Activated B cell treated with CpG ODN at 0.5 μM for 24 hours (primary cell): ENCODE measurements at regions of chr1 and their contacts with region 1.

Region 1: GRCh38 chr1:224922404-224923164 is 6.9 kb upstream of the DNAH14 start:
- DNase-seq: no peak
- ATAC-seq: no peak
- H3K4me3 Mint-ChIP-seq: no peak overlapping the region
- H3K27ac Mint-ChIP-seq: no peak overlapping the region
- H3K4me1 Mint-ChIP-seq: no peaks in the 10 kb centered on the region
- H3K27me3 Mint-ChIP-seq: peaks cover 5% of the 10 kb centered on the region
- CTCF ChIP-seq: no peak

Region 2: DNA sequence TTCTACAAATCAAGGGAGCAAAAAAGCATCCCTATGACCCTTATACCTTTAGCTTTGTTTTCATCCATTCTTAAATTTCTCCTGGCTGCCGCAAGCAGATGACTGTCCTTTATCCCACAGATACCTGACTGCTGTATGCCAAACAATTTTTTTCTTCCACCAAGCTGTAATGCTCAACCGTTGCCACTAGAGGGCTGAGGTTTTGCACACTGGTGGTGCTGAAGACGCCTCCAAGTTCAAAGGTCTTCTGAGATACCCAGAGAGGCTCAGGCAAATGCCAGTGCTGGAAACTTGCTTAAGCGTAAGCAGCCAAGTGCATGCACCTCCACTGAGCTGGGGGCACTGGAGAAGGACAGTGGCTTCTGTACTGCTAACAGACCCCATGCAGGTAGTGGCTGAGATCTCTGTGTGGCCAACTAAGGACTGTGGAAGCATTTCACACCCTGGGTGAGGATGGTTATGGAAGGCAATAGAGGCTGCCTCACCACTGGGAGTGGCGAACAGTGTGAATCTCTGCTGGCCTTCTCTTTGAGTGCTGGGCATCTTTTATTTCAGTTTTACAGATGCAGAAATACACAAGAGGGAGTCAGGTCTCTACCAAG is 277.9 kb before region 1 on chr1:
- CTCF ChIA-PET with region 1: no interaction called
- POLR2A ChIA-PET with region 1: no interaction called
- intact Hi-C with region 1: loop called (anchors 1 kb)
- DNase-seq: peak; percentile 18
- ATAC-seq: no peak
- H3K4me3 Mint-ChIP-seq: no peak overlapping the region
- H3K27ac Mint-ChIP-seq: no peak overlapping the region
- H3K4me1 Mint-ChIP-seq: no peaks in the 10 kb centered on the region
- H3K27me3 Mint-ChIP-seq: peaks cover 6% of the 10 kb centered on the region
- CTCF ChIP-seq: peak; percentile 92

Region 3: DNA sequence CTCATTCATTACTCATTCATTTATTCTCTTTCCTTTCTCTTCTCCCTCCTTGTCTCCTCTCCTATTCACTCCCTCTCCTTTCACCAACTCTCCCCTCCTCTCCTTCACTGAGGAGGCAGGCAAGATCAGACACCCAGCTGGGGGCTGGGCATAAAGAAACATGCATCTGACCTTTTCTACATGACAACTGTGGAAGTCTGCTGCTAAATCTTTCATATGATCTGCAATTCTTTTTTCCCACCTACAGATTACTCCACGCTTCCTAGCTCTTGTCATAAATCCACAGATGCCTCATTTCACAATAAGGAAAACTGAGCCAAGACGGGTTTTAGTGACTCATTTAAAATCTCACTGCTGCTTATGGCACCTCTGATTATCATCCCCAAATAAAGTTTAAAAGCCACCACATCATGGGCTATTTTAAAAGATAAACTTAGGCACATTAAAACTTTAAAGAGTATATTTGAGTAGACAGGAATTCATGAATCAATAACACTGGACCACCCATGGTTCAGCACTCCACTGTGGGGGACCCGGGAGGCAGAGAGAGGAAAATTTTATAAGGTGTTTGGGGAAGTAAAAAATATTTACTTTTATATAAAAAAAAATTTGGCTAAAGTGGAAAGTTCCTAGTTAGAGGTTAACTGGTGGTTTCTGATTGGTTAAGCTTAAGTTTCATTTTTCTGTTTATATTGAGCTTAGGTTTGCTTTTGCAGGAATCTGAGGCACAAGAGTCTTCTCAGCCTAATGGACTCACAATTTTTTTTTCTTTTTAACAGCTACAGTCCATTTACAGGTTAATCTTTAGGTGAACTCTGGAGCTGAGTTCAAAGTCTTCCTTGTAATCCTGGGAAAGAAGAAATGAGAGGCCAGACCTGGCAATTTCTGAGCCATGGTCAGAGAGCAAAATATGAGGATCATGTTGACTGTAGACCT is 48.9 kb before region 1 on chr1:
- CTCF ChIA-PET with region 1: no interaction called
- POLR2A ChIA-PET with region 1: no interaction called
- intact Hi-C with region 1: no loop called
- DNase-seq: no peak
- ATAC-seq: no peak
- H3K4me3 Mint-ChIP-seq: no peak overlapping the region
- H3K27ac Mint-ChIP-seq: no peak overlapping the region
- H3K4me1 Mint-ChIP-seq: no peaks in the 10 kb centered on the region
- H3K27me3 Mint-ChIP-seq: peaks cover 10% of the 10 kb centered on the region
- CTCF ChIP-seq: no peak